ENCODE measurements at regions of chr5 and their contacts with region 1.

Region 1: GRCh38 chr5:112757468-112758208 is 20.0 kb downstream of the APC start:
- DNase-seq: no peak
- ATAC-seq: peak; percentile 71

Region 2: GRCh38 chr5:112628219-112628980 is 129.2 kb before region 1 on chr5:
- intact Hi-C with region 1: loop called (anchors 5 kb)
- DNase-seq: no peak
- ATAC-seq: no peak

Region 3: GRCh38 chr5:112691758-112692157 is 65.9 kb before region 1 on chr5:
- intact Hi-C with region 1: loop called (anchors 5 kb)
- DNase-seq: no peak
- ATAC-seq: no peak

Measured in Right ventricle myocardium inferior (tissue), 1 donor.